ENCODE measurements at regions of chr4 and their contacts with region 1.

Region 1: GRCh38 chr4:54322818-54323417 is 93.8 kb downstream of the PDGFRA start:
- DNase-seq: peak; percentile 26 to 69
- ATAC-seq: peak; percentile 69 to 85 (median 72)
- H3K4me3 ChIP-seq: no peak overlapping the region
- H3K27ac ChIP-seq: no peak overlapping the region
- H3K4me1 ChIP-seq: peaks cover 0 to 4% (median 0%) of the 10 kb centered on the region in 9 donors
- H3K27me3 ChIP-seq: no peaks in the 10 kb centered on the region
- CTCF ChIP-seq: peak; percentile 49 to 84 (median 75)

Region 2: GRCh38 chr4:54440394-54441136 is 117.6 kb after region 1 on chr4:
- intact Hi-C with region 1: loop called (anchors 2 to 5 kb)
- DNase-seq: peak in 1 of 2 donors; percentile 18
- ATAC-seq: peak in 2 of 8 donors; percentile 53 to 81
- H3K4me3 ChIP-seq: peak overlapping the region in 7 of 10 donors; percentile 3 to 45 (median 20)
- H3K27ac ChIP-seq: peak overlapping the region in 7 of 10 donors; percentile 22 to 69 (median 40)
- H3K4me1 ChIP-seq: peaks cover 0 to 15% (median 0%) of the 10 kb centered on the region in 9 donors
- H3K27me3 ChIP-seq: peaks cover 0 to under 1% (median 0%) of the 10 kb centered on the region in 7 donors
- CTCF ChIP-seq: peak; percentile 30 to 77 (median 67)

Region 3: GRCh38 chr4:54840992-54841768 is 518.3 kb after region 1 on chr4:
- intact Hi-C with region 1: loop called in 5 of 10 experiments (anchors 2 to 5 kb)
- DNase-seq: peak in 1 of 2 donors; percentile 26
- ATAC-seq: peak in 7 of 8 donors; percentile 54 to 88 (median 78)
- H3K4me3 ChIP-seq: no peak overlapping the region
- H3K27ac ChIP-seq: no peak overlapping the region
- H3K4me1 ChIP-seq: peaks cover 0 to 21% (median 7%) of the 10 kb centered on the region in 9 donors
- H3K27me3 ChIP-seq: no peaks in the 10 kb centered on the region
- CTCF ChIP-seq: peak; percentile 10 to 55 (median 46)

Region 4: GRCh38 chr4:54941994-54942552 is 619.2 kb after region 1 on chr4:
- intact Hi-C with region 1: loop called in 1 of 10 experiments (anchors 5 kb)
- DNase-seq: peak; percentile 19 to 36
- ATAC-seq: peak in 7 of 8 donors; percentile 67 to 93 (median 89)
- H3K4me3 ChIP-seq: peak overlapping the region in 1 of 10 donors; percentile 13
- H3K27ac ChIP-seq: peak overlapping the region in 8 of 10 donors; percentile 15 to 65 (median 31)
- H3K4me1 ChIP-seq: peaks cover 0 to 33% (median 10%) of the 10 kb centered on the region in 9 donors
- H3K27me3 ChIP-seq: no peaks in the 10 kb centered on the region
- CTCF ChIP-seq: no peak

Region 5: GRCh38 chr4:54961357-54961975 is 638.5 kb after region 1 on chr4:
- intact Hi-C with region 1: loop called (anchors 5 kb)
- DNase-seq: no peak
- ATAC-seq: peak in 5 of 8 donors; percentile 31 to 79 (median 64)
- H3K4me3 ChIP-seq: no peak overlapping the region
- H3K27ac ChIP-seq: no peak overlapping the region
- H3K4me1 ChIP-seq: no peaks in the 10 kb centered on the region
- H3K27me3 ChIP-seq: no peaks in the 10 kb centered on the region
- CTCF ChIP-seq: peak; percentile 35 to 72 (median 67)

Region 6: GRCh38 chr4:55321707-55322264 is 998.9 kb after region 1 on chr4:
- intact Hi-C with region 1: loop called in 2 of 10 experiments (anchors 10 kb)
- DNase-seq: peak in 1 of 2 donors; percentile 88
- ATAC-seq: peak in 6 of 8 donors; percentile 17 to 69 (median 52)
- H3K4me3 ChIP-seq: no peak overlapping the region
- H3K27ac ChIP-seq: no peak overlapping the region
- H3K4me1 ChIP-seq: peaks cover 0 to 27% (median 13%) of the 10 kb centered on the region in 9 donors
- H3K27me3 ChIP-seq: no peaks in the 10 kb centered on the region
- CTCF ChIP-seq: peak; percentile 44 to 84 (median 68)